Activated naive CD8-positive, alpha-beta T cell treated with anti-CD3 and anti-CD28 coated beads, Interleukin-2, amount 10 ng/mL, durations not matched to agents 7 days and 5 days (primary cell): ENCODE measurements at regions of chr3 and their contacts with region 1.

Region 1: DNA sequence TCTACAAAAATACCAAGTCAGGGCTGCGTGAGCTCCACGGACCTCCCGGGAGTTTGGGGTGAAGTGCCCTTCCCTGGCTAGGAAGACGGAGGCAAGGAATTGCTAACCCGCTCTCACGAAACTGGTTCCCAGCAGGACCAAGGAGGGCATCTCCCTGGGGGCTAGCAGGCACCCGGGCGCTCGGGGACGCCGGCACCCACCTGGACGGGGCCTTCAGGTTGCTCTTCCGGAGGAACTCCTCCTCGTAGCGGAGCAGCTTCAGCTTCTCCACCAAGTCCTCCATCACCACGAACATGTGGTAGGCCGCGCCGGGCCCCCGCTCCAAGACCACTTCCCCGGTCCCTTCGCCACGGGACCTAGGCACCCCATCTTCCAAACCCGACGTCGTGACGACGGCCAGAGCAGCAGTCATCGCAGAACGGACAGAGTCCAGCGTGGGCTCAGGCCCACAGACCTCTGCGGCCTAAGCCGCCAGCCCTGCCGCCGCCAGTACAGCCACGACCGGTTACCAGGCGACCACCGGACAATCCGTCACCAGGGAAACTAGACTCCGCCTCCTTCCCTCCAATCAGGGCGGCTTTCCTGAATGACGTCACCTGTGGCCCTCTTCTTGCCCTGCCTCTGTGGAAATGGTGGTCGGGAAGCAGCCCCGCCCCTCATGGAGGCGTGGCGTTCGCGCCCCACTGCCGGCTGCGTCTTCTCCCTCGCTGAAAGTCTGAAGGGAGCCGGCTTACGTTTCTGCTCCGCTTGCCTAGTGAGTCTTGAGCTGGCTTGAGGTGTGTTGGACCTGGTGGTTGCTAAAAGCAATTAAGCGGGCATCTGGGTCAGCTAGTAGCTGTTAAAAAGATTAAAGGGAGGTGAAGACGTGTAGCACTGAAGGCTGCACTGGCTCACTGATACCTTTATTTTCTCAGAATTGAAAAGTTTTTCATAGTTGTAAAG is at the start of gene IFT57:
- DNase-seq: peak; percentile 95
- ATAC-seq: peak; percentile 92
- H3K4me3 Mint-ChIP-seq: peak within 1 kb of the TSS; percentile 95
- H3K27ac Mint-ChIP-seq: peak within 1 kb of the TSS; percentile 98
- H3K4me1 Mint-ChIP-seq: peaks cover 34% of the 10 kb centered on the region
- H3K27me3 Mint-ChIP-seq: no peaks in the 10 kb centered on the region
- total RNA-seq, gene IFT57: 22.0 to 26.9 TPM

Region 2: GRCh38 chr3:108292905-108293328 is 70.7 kb after region 1 on chr3:
- POLR2A ChIA-PET with region 1: interaction called, 59 read pairs
- DNase-seq: no peak
- ATAC-seq: peak; percentile 89
- H3K4me3 Mint-ChIP-seq: peak overlapping the region; percentile 60
- H3K27ac Mint-ChIP-seq: peak overlapping the region; percentile 85
- H3K4me1 Mint-ChIP-seq: peaks cover 57% of the 10 kb centered on the region
- H3K27me3 Mint-ChIP-seq: no peaks in the 10 kb centered on the region

Region 3: DNA sequence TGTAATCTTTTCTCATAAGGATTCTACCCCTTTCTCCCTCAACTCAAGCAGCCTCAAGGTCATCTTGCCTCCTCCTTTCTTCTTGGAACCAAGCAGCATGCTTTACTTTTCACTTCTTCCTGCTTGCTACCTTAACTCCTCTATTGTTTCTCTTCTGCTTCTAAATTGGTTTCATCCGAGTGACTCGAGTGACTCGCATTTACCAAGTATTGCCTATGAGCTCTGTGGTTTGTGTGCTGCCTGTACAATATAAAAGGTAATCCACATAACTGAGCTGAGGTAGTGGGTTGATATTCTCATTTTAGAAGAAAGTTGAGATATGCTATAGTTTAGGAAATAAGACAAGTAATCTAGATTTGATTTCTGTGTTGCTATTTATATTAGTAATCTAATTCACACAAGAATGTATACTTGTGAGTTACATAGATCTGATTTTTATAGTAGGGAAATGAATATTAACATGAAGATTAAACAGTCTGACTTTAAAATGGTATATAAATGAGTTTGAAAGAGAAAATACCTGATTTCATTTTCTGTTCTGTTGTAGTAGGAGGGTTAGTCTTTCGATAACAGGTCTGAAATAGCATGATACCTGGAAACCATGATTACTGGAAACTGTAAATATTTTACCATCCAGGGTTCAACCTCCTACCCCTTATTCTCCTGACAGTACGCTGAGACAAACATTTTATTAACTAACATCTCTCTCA is 79.7 kb after region 1 on chr3:
- POLR2A ChIA-PET with region 1: interaction called, 59 read pairs
- DNase-seq: no peak
- ATAC-seq: peak; percentile 78
- H3K4me3 Mint-ChIP-seq: peak overlapping the region; percentile 79
- H3K27ac Mint-ChIP-seq: peak overlapping the region; percentile 97
- H3K4me1 Mint-ChIP-seq: peaks cover 61% of the 10 kb centered on the region
- H3K27me3 Mint-ChIP-seq: no peaks in the 10 kb centered on the region